ENCODE measurements at regions of chr1 and their contacts with region 1.

Region 1: GRCh38 chr1:83860490-83861221 is 138.3 kb downstream of the TTLL7 start:
- DNase-seq: peak; percentile 57 to 84 (median 70)
- ATAC-seq: peak; percentile 92
- H3K4me3 ChIP-seq: peak overlapping the region; percentile 63
- H3K4me3 Mint-ChIP-seq: peak overlapping the region; percentile 76
- H3K27ac ChIP-seq: peak overlapping the region; percentile 32 to 79
- H3K27ac Mint-ChIP-seq: peak overlapping the region; percentile 72
- H3K4me1 ChIP-seq: peaks cover 10% of the 10 kb centered on the region
- H3K4me1 Mint-ChIP-seq: peaks cover 19% of the 10 kb centered on the region
- H3K27me3 ChIP-seq: no peaks in the 10 kb centered on the region
- H3K27me3 Mint-ChIP-seq: no peaks in the 10 kb centered on the region
- CTCF ChIP-seq: peak; percentile 80

Region 2: GRCh38 chr1:83593073-83593472 is 267.6 kb before region 1 on chr1:
- CTCF ChIA-PET with region 1: no interaction called
- POLR2A ChIA-PET with region 1: no interaction called
- intact Hi-C with region 1: loop called in 1 of 2 experiments (anchors 10 kb)
- DNase-seq: no peak
- ATAC-seq: no peak
- H3K4me3 ChIP-seq: no peak overlapping the region
- H3K4me3 Mint-ChIP-seq: no peak overlapping the region
- H3K27ac ChIP-seq: no peak overlapping the region
- H3K27ac Mint-ChIP-seq: no peak overlapping the region
- H3K4me1 ChIP-seq: no peaks in the 10 kb centered on the region
- H3K4me1 Mint-ChIP-seq: peaks cover 18% of the 10 kb centered on the region
- H3K27me3 ChIP-seq: no peaks in the 10 kb centered on the region
- H3K27me3 Mint-ChIP-seq: no peaks in the 10 kb centered on the region
- CTCF ChIP-seq: no peak

Region 3: GRCh38 chr1:83692524-83693381 is 167.9 kb before region 1 on chr1:
- CTCF ChIA-PET with region 1: no interaction called
- POLR2A ChIA-PET with region 1: no interaction called
- intact Hi-C with region 1: no loop called
- DNase-seq: peak in 6 of 14 experiments; percentile 7 to 38 (median 18)
- ATAC-seq: peak; percentile 66
- H3K4me3 ChIP-seq: peak overlapping the region; percentile 44
- H3K4me3 Mint-ChIP-seq: peak overlapping the region; percentile 93
- H3K27ac ChIP-seq: no peak overlapping the region
- H3K27ac Mint-ChIP-seq: peak overlapping the region; percentile 19
- H3K4me1 ChIP-seq: peaks cover 8% of the 10 kb centered on the region
- H3K4me1 Mint-ChIP-seq: peaks cover 20% of the 10 kb centered on the region
- H3K27me3 ChIP-seq: no peaks in the 10 kb centered on the region
- H3K27me3 Mint-ChIP-seq: no peaks in the 10 kb centered on the region
- CTCF ChIP-seq: no peak